GM12878 (cell line): ENCODE measurements at regions of chr18 and their contacts with region 1.

Region 1: GRCh38 chr18:50878345-50879301 is at the start of gene ME2:
- DNase-seq: peak; percentile 59
- ATAC-seq: peak; percentile 95
- H3K4me3 ChIP-seq: peak within 1 kb of the TSS; percentile 79
- H3K27ac ChIP-seq: peak within 1 kb of the TSS; percentile 99
- H3K4me1 ChIP-seq: peaks cover 15% of the 10 kb centered on the region
- H3K27me3 ChIP-seq: no peaks in the 10 kb centered on the region
- CTCF ChIP-seq: no peak
- EP300 ChIP-seq: no peak
- POLR2A ChIP-seq: peak; percentile 95
- RAD21 ChIP-seq: no peak
- polyA plus RNA-seq, gene ME2: 41.3 to 46.9 TPM

Region 2: DNA sequence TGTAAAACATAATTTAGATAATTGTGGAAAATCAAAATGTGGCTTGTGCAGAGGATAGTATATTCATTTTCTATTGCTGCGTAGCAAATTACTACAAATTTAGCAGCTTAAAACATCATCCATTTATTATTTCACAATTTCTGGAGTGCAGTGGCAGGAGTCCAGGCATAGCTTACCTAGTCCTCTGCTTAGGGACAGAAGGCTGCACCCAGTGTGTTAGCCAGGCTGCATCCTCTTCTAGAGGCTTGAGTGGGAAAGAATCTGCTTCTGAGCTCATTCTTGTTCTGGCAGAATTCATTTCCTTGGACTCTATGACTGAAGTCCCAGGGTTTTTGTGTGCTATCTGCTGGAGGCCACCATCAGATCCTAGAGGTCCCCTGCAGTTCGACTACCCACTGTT is 98.5 kb before region 1 on chr18:
- CTCF ChIA-PET with region 1: no interaction called
- POLR2A ChIA-PET with region 1: no interaction called
- RAD21 ChIA-PET with region 1: no interaction called
- SMC1A ChIA-PET with region 1: no interaction called
- in situ Hi-C with region 1: no loop called
- intact Hi-C with region 1: no loop called
- DNase-seq: no peak
- ATAC-seq: no peak
- H3K4me3 ChIP-seq: no peak overlapping the region
- H3K27ac ChIP-seq: no peak overlapping the region
- H3K4me1 ChIP-seq: no peaks in the 10 kb centered on the region
- H3K27me3 ChIP-seq: no peaks in the 10 kb centered on the region; a peak in 2 of 4 replicates
- CTCF ChIP-seq: no peak
- EP300 ChIP-seq: no peak
- POLR2A ChIP-seq: no peak
- RAD21 ChIP-seq: no peak

Region 3: GRCh38 chr18:50830544-50830943 is 48.1 kb before region 1 on chr18:
- CTCF ChIA-PET with region 1: interaction called, 4 read pairs
- POLR2A ChIA-PET with region 1: interaction called, 10 read pairs
- RAD21 ChIA-PET with region 1: interaction called, 3 read pairs
- SMC1A ChIA-PET with region 1: interaction called, 4 read pairs
- in situ Hi-C with region 1: no loop called
- intact Hi-C with region 1: no loop called
- DNase-seq: no peak
- ATAC-seq: peak; percentile 89
- H3K4me3 ChIP-seq: no peak overlapping the region
- H3K27ac ChIP-seq: peak overlapping the region; percentile 40; the same call in 1 of the 2 replicates
- H3K4me1 ChIP-seq: peaks cover 21% of the 10 kb centered on the region
- H3K27me3 ChIP-seq: no peaks in the 10 kb centered on the region
- CTCF ChIP-seq: no peak
- EP300 ChIP-seq: no peak
- POLR2A ChIP-seq: 0 out of 2 replicates have a peak, but pooled peaks have one; percentile 25
- RAD21 ChIP-seq: no peak

Region 4: DNA sequence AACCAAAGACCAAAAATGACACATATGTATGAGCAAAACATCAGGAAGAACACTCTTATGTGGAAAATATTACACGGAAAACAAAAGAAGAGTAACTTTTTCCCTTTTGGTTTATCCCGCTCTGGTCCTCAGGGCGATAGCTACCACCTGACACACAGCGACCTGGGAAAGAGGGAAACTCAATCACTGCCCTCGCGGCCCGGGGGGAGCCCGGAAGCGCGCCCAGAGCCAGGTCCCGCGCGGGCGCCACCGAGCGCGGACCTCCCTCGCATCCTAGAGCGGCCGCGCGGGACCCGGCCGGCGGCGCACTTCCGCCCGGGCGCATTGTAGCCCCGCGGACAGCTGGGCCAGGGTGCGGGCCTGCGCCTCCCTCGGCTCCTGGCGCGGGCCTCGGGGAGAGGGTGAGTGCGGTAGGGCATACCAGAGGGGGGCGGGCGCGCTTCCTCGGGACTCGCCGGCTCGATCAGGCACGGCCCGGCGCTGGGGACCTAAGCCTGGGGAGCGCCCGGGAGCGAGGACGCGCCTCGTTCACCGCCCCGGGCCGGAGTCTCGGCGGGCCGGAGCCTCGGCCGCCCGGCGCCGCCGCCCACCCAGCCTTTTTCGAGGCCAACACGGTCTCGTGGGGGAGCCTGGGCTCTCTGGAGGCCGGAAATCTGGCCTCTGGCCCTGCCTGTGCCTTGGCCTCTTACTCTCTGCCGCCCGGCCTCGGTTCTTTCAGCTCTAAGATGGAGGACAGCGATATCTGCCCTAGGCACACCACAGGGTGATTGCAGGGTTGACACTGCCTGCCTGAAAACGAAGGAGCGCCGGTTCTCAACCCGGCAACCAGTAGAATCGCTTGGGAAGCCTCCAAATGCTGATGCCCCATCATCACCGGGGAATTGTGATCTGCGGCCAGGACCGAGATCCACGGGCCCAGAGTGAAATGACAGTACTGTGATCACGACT is 89.4 kb after region 1 on chr18 and contains the start of gene ELAC1:
- CTCF ChIA-PET with region 1: no interaction called
- POLR2A ChIA-PET with region 1: interaction called, 7 read pairs
- RAD21 ChIA-PET with region 1: interaction called, 5 read pairs
- SMC1A ChIA-PET with region 1: no interaction called
- in situ Hi-C with region 1: no loop called
- intact Hi-C with region 1: loop called (anchors 2 kb)
- DNase-seq: peak; percentile 20
- ATAC-seq: peak; percentile 96
- H3K4me3 ChIP-seq: peak within 1 kb of the TSS; percentile 74
- H3K27ac ChIP-seq: peak within 1 kb of the TSS; percentile 89
- H3K4me1 ChIP-seq: peaks cover 5% of the 10 kb centered on the region
- H3K27me3 ChIP-seq: no peaks in the 10 kb centered on the region
- CTCF ChIP-seq: no peak
- EP300 ChIP-seq: no peak
- POLR2A ChIP-seq: peak; percentile 97
- RAD21 ChIP-seq: no peak
- polyA plus RNA-seq, gene ELAC1: 4.9 to 8.0 TPM

Region 5: GRCh38 chr18:51029694-51030536 is 151.3 kb after region 1 on chr18 and contains the start of gene SMAD4:
- CTCF ChIA-PET with region 1: interaction called, 3 read pairs
- POLR2A ChIA-PET with region 1: interaction called, 7 read pairs
- RAD21 ChIA-PET with region 1: interaction called, 3 read pairs
- SMC1A ChIA-PET with region 1: interaction called, 6 read pairs
- in situ Hi-C with region 1: no loop called
- intact Hi-C with region 1: loop called (anchors 2 kb)
- DNase-seq: peak; percentile 71
- ATAC-seq: peak; percentile 90
- H3K4me3 ChIP-seq: peak within 1 kb of the TSS; percentile 88
- H3K27ac ChIP-seq: peak within 1 kb of the TSS; percentile 77
- H3K4me1 ChIP-seq: peaks cover 6% of the 10 kb centered on the region
- H3K27me3 ChIP-seq: no peaks in the 10 kb centered on the region
- CTCF ChIP-seq: 0 out of 6 replicates have a peak, but pooled peaks of 1 of the 3 experiments have one; percentile 4
- EP300 ChIP-seq: no peak
- POLR2A ChIP-seq: peak; percentile 97
- RAD21 ChIP-seq: no peak
- polyA plus RNA-seq, gene SMAD4: 9.6 to 13.3 TPM

Region 6: DNA sequence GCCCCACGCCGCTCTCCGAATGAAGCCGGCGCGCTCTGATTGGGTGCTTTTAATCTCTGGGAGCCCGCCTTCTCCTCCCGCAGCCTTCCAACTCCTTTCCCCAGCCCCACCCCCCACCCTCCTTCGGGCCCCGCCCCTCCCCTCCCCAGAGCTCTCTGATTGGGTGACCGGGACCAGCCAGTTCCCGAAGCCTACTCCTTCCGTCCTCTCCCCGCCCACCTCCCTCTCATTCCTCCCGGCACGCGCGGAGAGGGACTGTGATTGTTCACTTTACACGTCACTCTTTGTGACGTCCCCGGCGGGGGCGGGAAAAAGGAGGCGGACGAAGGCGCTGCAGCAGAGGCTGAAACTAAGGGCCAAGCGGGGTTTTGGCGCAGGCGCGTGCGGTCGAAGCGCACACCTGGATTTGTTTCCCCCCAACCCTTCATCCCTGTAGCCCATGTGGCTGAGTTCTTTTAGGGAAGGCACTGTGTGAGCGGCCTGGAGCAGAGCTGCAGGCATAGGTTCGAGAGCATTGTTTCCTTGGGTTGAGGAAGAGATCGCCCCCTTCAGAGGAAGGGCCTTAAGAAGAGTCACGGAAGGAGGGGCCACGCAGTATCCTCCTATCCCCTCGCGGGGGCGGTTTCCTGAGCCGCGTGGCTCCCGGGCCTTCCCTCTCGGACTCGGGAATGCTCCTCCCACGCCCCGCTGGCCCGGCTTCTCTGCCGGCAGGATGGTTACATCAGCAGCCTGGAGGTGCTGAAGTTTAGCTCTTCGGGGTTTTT is 319.2 kb after region 1 on chr18 and contains the start of gene MEX3C:
- CTCF ChIA-PET with region 1: no interaction called
- POLR2A ChIA-PET with region 1: interaction called, 4 read pairs
- RAD21 ChIA-PET with region 1: interaction called, 3 read pairs
- SMC1A ChIA-PET with region 1: no interaction called
- in situ Hi-C with region 1: loop called (anchors 10 kb)
- intact Hi-C with region 1: loop called (anchors 10 kb)
- DNase-seq: peak; percentile 95
- ATAC-seq: peak; percentile 83
- H3K4me3 ChIP-seq: peak within 1 kb of the TSS; percentile 69
- H3K27ac ChIP-seq: peak within 1 kb of the TSS; percentile 95
- H3K4me1 ChIP-seq: no peaks in the 10 kb centered on the region
- H3K27me3 ChIP-seq: no peaks in the 10 kb centered on the region
- CTCF ChIP-seq: peak in 2 of 3 experiments; percentile 9 to 23; a peak in 2 of 6 replicates
- EP300 ChIP-seq: no peak
- POLR2A ChIP-seq: peak; percentile 77
- RAD21 ChIP-seq: no peak
- polyA plus RNA-seq, gene MEX3C: 7.9 to 9.9 TPM

Region 7: DNA sequence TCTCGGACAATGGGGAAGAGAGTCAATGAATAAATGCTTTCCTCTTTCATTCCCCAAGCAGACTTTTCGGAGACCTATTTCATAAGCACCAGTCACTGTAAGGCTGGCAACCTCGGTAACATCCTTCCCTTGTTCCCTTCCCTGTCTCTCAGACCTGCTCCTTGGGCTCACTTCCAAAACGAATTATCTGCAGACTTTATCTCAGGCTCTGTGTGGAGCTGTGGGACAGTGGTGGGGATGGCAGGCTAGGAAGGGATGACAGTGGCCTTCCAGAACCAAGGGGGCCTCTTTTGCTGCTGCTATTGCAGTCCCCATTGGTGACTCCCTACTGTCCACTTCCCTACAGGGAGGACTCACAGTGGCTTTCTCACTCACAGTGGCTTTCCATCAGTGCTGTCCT is 504.5 kb after region 1 on chr18:
- CTCF ChIA-PET with region 1: no interaction called
- POLR2A ChIA-PET with region 1: no interaction called
- RAD21 ChIA-PET with region 1: no interaction called
- SMC1A ChIA-PET with region 1: no interaction called
- in situ Hi-C with region 1: no loop called
- intact Hi-C with region 1: no loop called
- DNase-seq: no peak
- ATAC-seq: no peak
- H3K4me3 ChIP-seq: no peak overlapping the region
- H3K27ac ChIP-seq: no peak overlapping the region
- H3K4me1 ChIP-seq: no peaks in the 10 kb centered on the region
- H3K27me3 ChIP-seq: no peaks in the 10 kb centered on the region; a peak in 2 of 4 replicates
- CTCF ChIP-seq: no peak
- EP300 ChIP-seq: no peak
- POLR2A ChIP-seq: no peak
- RAD21 ChIP-seq: no peak